A549 (cell line): ENCODE measurements at regions of chr12 and their contacts with region 1.

Region 1: GRCh38 chr12:4276524-4277204 is 3.1 kb downstream of the CCND2 start:
- DNase-seq: peak; percentile 76 to 84
- ATAC-seq: peak; percentile 58 to 84
- H3K4me3 ChIP-seq: no peak overlapping the region
- H3K27ac ChIP-seq: no peak overlapping the region
- H3K4me1 ChIP-seq: peaks cover 40% of the 10 kb centered on the region
- CTCF ChIP-seq: peak; percentile 88
- EP300 ChIP-seq: no peak
- POLR2A ChIP-seq: no peak
- RAD21 ChIP-seq: peak; percentile 90 to 96

Region 2: DNA sequence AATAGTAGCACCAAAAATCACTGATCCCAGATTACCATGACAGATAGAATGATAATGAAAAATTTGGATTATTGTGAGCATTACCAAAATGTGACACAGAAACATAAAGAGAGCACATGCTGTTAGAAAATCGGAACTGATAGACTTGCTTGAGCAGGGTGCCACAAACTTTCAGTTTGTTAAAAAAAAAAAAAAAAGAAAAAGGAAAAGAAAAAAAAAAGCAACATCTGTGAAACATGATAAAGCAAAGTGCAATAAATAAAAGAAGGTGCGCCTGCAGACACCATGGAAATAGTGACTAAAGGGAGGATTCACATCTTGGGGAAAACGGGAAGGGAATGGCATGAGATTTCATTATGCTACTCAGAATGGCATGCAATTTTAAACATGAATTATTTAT is 396.8 kb before region 1 on chr12:
- CTCF ChIA-PET with region 1: interaction called, 235 read pairs
- POLR2A ChIA-PET with region 1: no interaction called
- DNase-seq: no peak
- ATAC-seq: no peak
- H3K4me3 ChIP-seq: no peak overlapping the region
- H3K27ac ChIP-seq: no peak overlapping the region
- H3K4me1 ChIP-seq: no peaks in the 10 kb centered on the region
- CTCF ChIP-seq: no peak
- EP300 ChIP-seq: no peak
- POLR2A ChIP-seq: no peak
- RAD21 ChIP-seq: no peak

Region 3: DNA sequence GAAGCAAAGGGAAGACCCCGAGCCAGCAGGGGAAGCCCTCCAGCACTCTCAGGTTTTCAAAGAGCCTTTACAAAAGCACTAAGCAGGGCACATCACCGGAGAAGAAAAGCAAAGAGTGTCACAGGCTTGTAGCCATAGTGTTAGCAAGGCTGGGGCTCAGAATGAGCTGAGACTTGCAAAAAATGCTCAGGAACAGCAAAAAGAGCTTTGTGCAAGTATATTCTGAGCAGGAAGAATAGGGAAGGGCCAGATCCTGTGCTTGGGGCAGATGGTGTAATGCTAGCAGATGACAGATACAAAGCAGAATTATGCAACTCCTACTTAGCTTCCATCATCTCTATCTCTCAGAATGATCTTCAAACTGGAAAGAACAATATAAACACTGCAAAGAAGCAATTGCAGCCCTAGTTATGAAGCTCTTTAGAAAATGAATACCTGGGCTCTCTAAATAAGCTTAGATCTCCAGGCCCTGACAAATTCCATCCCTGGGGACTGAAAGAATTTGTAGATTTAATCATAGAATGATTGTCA is 379.8 kb before region 1 on chr12:
- CTCF ChIA-PET with region 1: interaction called, 235 read pairs
- POLR2A ChIA-PET with region 1: no interaction called
- DNase-seq: no peak
- ATAC-seq: no peak
- H3K4me3 ChIP-seq: no peak overlapping the region
- H3K27ac ChIP-seq: no peak overlapping the region
- H3K4me1 ChIP-seq: no peaks in the 10 kb centered on the region
- CTCF ChIP-seq: no peak
- EP300 ChIP-seq: no peak
- POLR2A ChIP-seq: no peak
- RAD21 ChIP-seq: no peak

Region 4: GRCh38 chr12:3998968-3999826 is 277.5 kb before region 1 on chr12:
- CTCF ChIA-PET with region 1: interaction called, 74 read pairs
- POLR2A ChIA-PET with region 1: no interaction called
- DNase-seq: peak in 1 of 2 experiments; percentile 40
- ATAC-seq: no peak
- H3K4me3 ChIP-seq: no peak overlapping the region
- H3K27ac ChIP-seq: no peak overlapping the region
- H3K4me1 ChIP-seq: no peaks in the 10 kb centered on the region
- CTCF ChIP-seq: no peak
- EP300 ChIP-seq: no peak
- POLR2A ChIP-seq: no peak
- RAD21 ChIP-seq: no peak

Region 5: GRCh38 chr12:4037747-4038312 is 238.8 kb before region 1 on chr12:
- CTCF ChIA-PET with region 1: interaction called, 77 read pairs
- POLR2A ChIA-PET with region 1: no interaction called
- DNase-seq: peak; percentile 29 to 42
- ATAC-seq: peak; percentile 51 to 75; a peak in 3 of 6 replicates
- H3K4me3 ChIP-seq: no peak overlapping the region
- H3K27ac ChIP-seq: no peak overlapping the region
- H3K4me1 ChIP-seq: peaks cover 11% of the 10 kb centered on the region; the same call in 2 of the 3 replicates
- CTCF ChIP-seq: peak; percentile 80
- EP300 ChIP-seq: no peak
- POLR2A ChIP-seq: no peak
- RAD21 ChIP-seq: peak; percentile 79 to 81

Region 6: GRCh38 chr12:4261655-4262054 is 15.0 kb before region 1 on chr12:
- CTCF ChIA-PET with region 1: interaction called, 17 read pairs
- POLR2A ChIA-PET with region 1: no interaction called
- DNase-seq: no peak
- ATAC-seq: no peak
- H3K4me3 ChIP-seq: no peak overlapping the region
- H3K27ac ChIP-seq: no peak overlapping the region
- H3K4me1 ChIP-seq: no peaks in the 10 kb centered on the region
- CTCF ChIP-seq: no peak
- EP300 ChIP-seq: no peak
- POLR2A ChIP-seq: no peak
- RAD21 ChIP-seq: no peak

Region 7: DNA sequence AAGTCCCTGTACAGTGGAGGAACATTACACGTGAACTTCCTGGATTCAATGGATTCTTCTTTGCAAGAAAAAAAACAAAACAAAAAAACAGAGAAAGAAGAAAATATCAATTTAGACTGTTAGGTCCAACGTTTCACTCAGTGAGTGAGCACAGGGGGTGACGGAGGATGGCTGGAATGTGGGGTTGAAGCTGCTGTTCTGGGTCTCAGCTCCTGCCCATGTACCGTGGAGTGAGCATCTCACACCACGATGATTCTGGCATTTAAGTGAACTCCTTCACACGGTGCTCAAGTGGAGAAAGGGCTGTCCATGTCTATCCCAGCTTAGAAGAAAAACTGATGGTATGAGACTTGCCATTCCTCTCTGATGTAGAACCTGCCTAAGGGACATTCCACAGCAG is 20.1 kb after region 1 on chr12:
- CTCF ChIA-PET with region 1: interaction called, 62 read pairs
- POLR2A ChIA-PET with region 1: no interaction called
- DNase-seq: no peak
- ATAC-seq: no peak
- H3K4me3 ChIP-seq: no peak overlapping the region
- H3K27ac ChIP-seq: no peak overlapping the region
- H3K4me1 ChIP-seq: no peaks in the 10 kb centered on the region
- CTCF ChIP-seq: no peak
- EP300 ChIP-seq: no peak
- POLR2A ChIP-seq: no peak
- RAD21 ChIP-seq: no peak

Region 8: DNA sequence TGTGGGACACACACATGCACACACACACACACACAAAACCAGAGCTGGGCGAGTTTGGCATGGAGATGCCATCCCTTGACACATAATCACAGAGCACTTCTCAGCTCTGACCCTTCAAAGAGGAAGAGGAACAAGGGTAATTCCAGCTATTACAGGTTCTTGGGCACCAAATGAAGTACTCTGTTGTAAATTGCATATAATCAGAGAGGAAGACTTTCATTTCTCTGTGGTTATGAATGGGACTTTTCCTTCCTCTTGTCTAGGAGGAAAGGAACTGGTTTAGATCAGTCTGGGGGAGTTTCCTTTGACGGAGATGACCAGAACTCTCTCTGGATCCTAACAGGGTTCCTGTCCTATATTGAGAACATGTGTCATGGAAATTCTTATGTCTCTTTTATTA is 195.4 kb after region 1 on chr12:
- CTCF ChIA-PET with region 1: no interaction called
- POLR2A ChIA-PET with region 1: no interaction called
- DNase-seq: no peak
- ATAC-seq: no peak
- H3K4me3 ChIP-seq: no peak overlapping the region
- H3K27ac ChIP-seq: no peak overlapping the region
- H3K4me1 ChIP-seq: no peaks in the 10 kb centered on the region
- CTCF ChIP-seq: no peak
- EP300 ChIP-seq: no peak
- POLR2A ChIP-seq: no peak
- RAD21 ChIP-seq: no peak

Region 9: DNA sequence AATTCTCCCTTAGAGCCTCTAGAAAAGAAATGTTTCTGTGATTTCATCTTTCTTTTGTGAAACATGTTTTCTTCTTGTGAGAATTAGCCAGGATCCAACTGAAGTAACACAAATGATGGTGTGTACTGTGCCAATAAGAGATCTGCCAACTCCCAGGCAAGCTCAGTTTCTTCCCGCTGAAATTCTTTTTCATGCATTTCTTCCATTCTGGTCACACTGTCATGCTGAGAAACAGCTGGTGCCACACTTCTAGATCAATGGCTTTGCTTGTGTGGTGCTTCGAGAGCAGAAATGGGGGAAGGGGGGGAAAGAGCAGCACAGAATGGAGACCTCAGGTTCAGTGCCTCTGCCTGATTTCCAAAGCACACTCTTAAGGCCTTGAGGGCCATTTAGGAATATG is 210.3 kb after region 1 on chr12:
- CTCF ChIA-PET with region 1: no interaction called
- POLR2A ChIA-PET with region 1: no interaction called
- DNase-seq: no peak
- ATAC-seq: no peak
- H3K4me3 ChIP-seq: no peak overlapping the region
- H3K27ac ChIP-seq: no peak overlapping the region
- H3K4me1 ChIP-seq: no peaks in the 10 kb centered on the region
- CTCF ChIP-seq: no peak
- EP300 ChIP-seq: no peak
- POLR2A ChIP-seq: no peak
- RAD21 ChIP-seq: no peak